CD4-positive, alpha-beta T cell (primary cell): ENCODE measurements at regions of chr1 and their contacts with region 1.

Region 1: GRCh38 chr1:74913978-74914377 is 181.0 kb downstream of the TYW3 start:
- DNase-seq: no peak
- ATAC-seq: no peak
- H3K4me3 ChIP-seq: no peak overlapping the region
- H3K4me3 Mint-ChIP-seq: no peak overlapping the region
- H3K27ac ChIP-seq: no peak overlapping the region
- H3K27ac Mint-ChIP-seq: no peak overlapping the region
- H3K4me1 ChIP-seq: no peaks in the 10 kb centered on the region
- H3K4me1 Mint-ChIP-seq: no peaks in the 10 kb centered on the region
- H3K27me3 ChIP-seq: no peaks in the 10 kb centered on the region
- H3K27me3 Mint-ChIP-seq: no peaks in the 10 kb centered on the region
- CTCF ChIP-seq: no peak

Region 2: DNA sequence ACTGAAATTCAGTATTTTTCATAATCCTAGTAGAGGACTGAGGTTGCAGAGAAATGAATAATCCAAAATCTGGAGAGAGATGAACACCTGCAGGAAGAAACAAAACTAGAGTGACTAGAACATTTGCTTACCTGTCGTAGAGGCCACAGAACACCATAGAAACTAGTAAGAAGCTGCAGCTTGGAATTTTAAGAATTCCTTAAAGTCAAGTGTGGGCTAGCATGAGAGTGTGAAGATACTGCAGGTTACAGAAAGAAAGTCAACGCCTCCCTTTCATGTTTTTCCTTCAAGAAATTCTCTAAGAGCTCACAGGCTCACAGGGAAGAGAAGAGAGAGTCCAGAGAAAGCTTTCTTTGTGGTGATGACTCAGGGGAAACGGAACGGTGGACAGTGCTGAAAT is 1349.7 kb before region 1 on chr1:
- CTCF ChIA-PET with region 1: no interaction called
- POLR2A ChIA-PET with region 1: no interaction called
- intact Hi-C with region 1: loop called in 1 of 2 experiments (anchors 10 kb)
- DNase-seq: no peak
- ATAC-seq: no peak
- H3K4me3 ChIP-seq: no peak overlapping the region
- H3K4me3 Mint-ChIP-seq: no peak overlapping the region
- H3K27ac ChIP-seq: no peak overlapping the region
- H3K27ac Mint-ChIP-seq: no peak overlapping the region
- H3K4me1 ChIP-seq: no peaks in the 10 kb centered on the region
- H3K4me1 Mint-ChIP-seq: no peaks in the 10 kb centered on the region
- H3K27me3 ChIP-seq: no peaks in the 10 kb centered on the region
- H3K27me3 Mint-ChIP-seq: no peaks in the 10 kb centered on the region
- CTCF ChIP-seq: no peak

Region 3: DNA sequence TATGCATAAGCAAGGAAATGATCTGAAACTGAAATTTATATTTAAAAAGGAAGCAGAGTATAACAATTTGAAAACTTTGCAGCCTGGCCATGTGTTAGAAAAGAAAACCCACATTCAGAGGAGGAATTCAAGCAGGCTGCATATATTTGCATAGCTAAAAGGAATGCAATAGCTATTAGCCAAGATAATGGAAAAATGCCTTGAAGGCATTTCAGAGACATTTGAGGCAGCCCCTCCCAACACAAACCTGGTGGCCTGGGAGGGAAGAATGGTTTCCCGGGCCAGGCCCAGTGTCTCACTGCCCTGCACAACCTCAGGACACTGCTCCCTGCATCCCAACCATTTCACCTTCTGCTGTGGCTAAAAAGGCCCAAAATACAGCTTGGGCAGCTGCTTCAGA is 44.3 kb before region 1 on chr1:
- CTCF ChIA-PET with region 1: no interaction called
- POLR2A ChIA-PET with region 1: no interaction called
- intact Hi-C with region 1: no loop called
- DNase-seq: no peak
- ATAC-seq: no peak
- H3K4me3 ChIP-seq: no peak overlapping the region
- H3K4me3 Mint-ChIP-seq: no peak overlapping the region
- H3K27ac ChIP-seq: no peak overlapping the region
- H3K27ac Mint-ChIP-seq: no peak overlapping the region
- H3K4me1 ChIP-seq: no peaks in the 10 kb centered on the region
- H3K4me1 Mint-ChIP-seq: no peaks in the 10 kb centered on the region
- H3K27me3 ChIP-seq: no peaks in the 10 kb centered on the region
- H3K27me3 Mint-ChIP-seq: no peaks in the 10 kb centered on the region
- CTCF ChIP-seq: no peak